CD8-positive, alpha-beta T cell (primary cell): ENCODE measurements at regions of chr18 and their contacts with region 1.

Region 1: GRCh38 chr18:62186774-62187542 is at the starts of genes PIGN and RELCH:
- DNase-seq: peak; percentile 89 to 99 (median 93)
- ATAC-seq: peak; percentile 91
- H3K4me3 ChIP-seq: peak within 1 kb of the TSS; percentile 92 to 99
- H3K4me3 Mint-ChIP-seq: peak within 1 kb of the TSS; percentile 100
- H3K27ac ChIP-seq: peak within 1 kb of the TSS; percentile 63 to 79
- H3K27ac Mint-ChIP-seq: peak within 1 kb of the TSS; percentile 97
- H3K4me1 ChIP-seq: peaks cover 43% of the 10 kb centered on the region
- H3K4me1 Mint-ChIP-seq: peaks cover 63% of the 10 kb centered on the region
- H3K27me3 ChIP-seq: no peaks in the 10 kb centered on the region
- H3K27me3 Mint-ChIP-seq: no peaks in the 10 kb centered on the region
- CTCF ChIP-seq: no peak
- total RNA-seq, gene PIGN: 8.1 to 9.9 TPM
- total RNA-seq, gene RELCH: 39.2 to 40.5 TPM

Region 2: GRCh38 chr18:61865466-61866175 is 321.3 kb before region 1 on chr18:
- CTCF ChIA-PET with region 1: no interaction called
- POLR2A ChIA-PET with region 1: no interaction called
- intact Hi-C with region 1: no loop called
- DNase-seq: no peak
- ATAC-seq: no peak
- H3K4me3 ChIP-seq: no peak overlapping the region
- H3K4me3 Mint-ChIP-seq: no peak overlapping the region
- H3K27ac ChIP-seq: no peak overlapping the region
- H3K27ac Mint-ChIP-seq: no peak overlapping the region
- H3K4me1 ChIP-seq: no peaks in the 10 kb centered on the region
- H3K4me1 Mint-ChIP-seq: no peaks in the 10 kb centered on the region
- H3K27me3 ChIP-seq: no peaks in the 10 kb centered on the region
- H3K27me3 Mint-ChIP-seq: no peaks in the 10 kb centered on the region
- CTCF ChIP-seq: no peak

Region 3: GRCh38 chr18:62249478-62250097 is 62.6 kb after region 1 on chr18:
- CTCF ChIA-PET with region 1: interaction called, 84 read pairs
- POLR2A ChIA-PET with region 1: interaction called, 11 read pairs
- intact Hi-C with region 1: loop called (anchors 1 kb)
- DNase-seq: peak; percentile 44 to 83 (median 74)
- ATAC-seq: peak; percentile 56
- H3K4me3 ChIP-seq: no peak overlapping the region
- H3K4me3 Mint-ChIP-seq: no peak overlapping the region
- H3K27ac ChIP-seq: no peak overlapping the region
- H3K27ac Mint-ChIP-seq: no peak overlapping the region
- H3K4me1 ChIP-seq: no peaks in the 10 kb centered on the region
- H3K4me1 Mint-ChIP-seq: no peaks in the 10 kb centered on the region
- H3K27me3 ChIP-seq: no peaks in the 10 kb centered on the region
- H3K27me3 Mint-ChIP-seq: no peaks in the 10 kb centered on the region
- CTCF ChIP-seq: peak; percentile 90

Region 4: GRCh38 chr18:62425465-62426195 is 238.7 kb after region 1 on chr18:
- CTCF ChIA-PET with region 1: no interaction called
- POLR2A ChIA-PET with region 1: no interaction called
- intact Hi-C with region 1: loop called (anchors 2 kb)
- DNase-seq: peak; percentile 3 to 82 (median 46)
- ATAC-seq: peak; percentile 45
- H3K4me3 ChIP-seq: no peak overlapping the region
- H3K4me3 Mint-ChIP-seq: no peak overlapping the region
- H3K27ac ChIP-seq: no peak overlapping the region
- H3K27ac Mint-ChIP-seq: no peak overlapping the region
- H3K4me1 ChIP-seq: peaks cover 5% of the 10 kb centered on the region
- H3K4me1 Mint-ChIP-seq: peaks cover 17% of the 10 kb centered on the region
- H3K27me3 ChIP-seq: no peaks in the 10 kb centered on the region
- H3K27me3 Mint-ChIP-seq: no peaks in the 10 kb centered on the region
- CTCF ChIP-seq: peak; percentile 87

Region 5: DNA sequence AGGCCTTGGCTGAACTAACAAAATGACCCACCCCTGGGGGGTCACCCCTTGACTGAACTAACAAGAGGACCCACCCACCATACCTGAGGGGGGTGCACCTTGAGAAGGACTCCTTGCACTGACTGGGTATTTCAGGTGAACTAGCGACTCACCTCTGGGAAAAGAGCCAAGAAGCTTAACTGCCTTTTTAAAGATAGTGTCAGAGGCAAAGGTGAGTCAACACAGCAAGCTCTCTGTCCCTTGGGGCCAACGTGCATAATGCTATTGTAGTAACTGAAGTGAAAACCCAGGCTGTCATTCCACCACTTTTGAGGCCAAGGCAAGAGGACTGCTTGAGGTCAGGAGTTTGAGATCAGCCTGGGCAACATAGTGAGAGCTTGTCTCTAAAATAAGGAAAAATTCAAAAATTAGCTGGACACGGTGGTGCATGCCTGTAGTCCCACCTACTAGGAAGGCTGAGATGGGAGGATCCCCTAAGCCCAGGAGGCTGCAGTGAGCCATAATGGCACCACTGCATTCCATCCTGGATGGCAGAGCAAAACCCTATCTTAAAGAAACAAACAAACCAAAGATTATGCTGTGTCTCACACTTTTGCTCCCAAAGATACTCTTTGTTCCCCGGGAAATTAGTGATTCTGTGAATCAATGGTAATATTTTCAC is 299.5 kb after region 1 on chr18:
- CTCF ChIA-PET with region 1: no interaction called
- POLR2A ChIA-PET with region 1: no interaction called
- intact Hi-C with region 1: no loop called
- DNase-seq: no peak
- ATAC-seq: no peak
- H3K4me3 ChIP-seq: no peak overlapping the region
- H3K4me3 Mint-ChIP-seq: no peak overlapping the region
- H3K27ac ChIP-seq: no peak overlapping the region
- H3K27ac Mint-ChIP-seq: no peak overlapping the region
- H3K4me1 ChIP-seq: no peaks in the 10 kb centered on the region
- H3K4me1 Mint-ChIP-seq: no peaks in the 10 kb centered on the region
- H3K27me3 ChIP-seq: peaks cover 0 to 3% of the 10 kb centered on the region in 2 experiments
- H3K27me3 Mint-ChIP-seq: peaks cover 33% of the 10 kb centered on the region
- CTCF ChIP-seq: no peak

Region 6: GRCh38 chr18:62982600-62983251 is 795.8 kb after region 1 on chr18:
- CTCF ChIA-PET with region 1: interaction called, 4 read pairs
- POLR2A ChIA-PET with region 1: no interaction called
- intact Hi-C with region 1: loop called (anchors 2 to 5 kb)
- DNase-seq: peak; percentile 25 to 77 (median 57)
- ATAC-seq: peak; percentile 65
- H3K4me3 ChIP-seq: no peak overlapping the region
- H3K4me3 Mint-ChIP-seq: peak overlapping the region; percentile 62
- H3K27ac ChIP-seq: no peak overlapping the region
- H3K27ac Mint-ChIP-seq: no peak overlapping the region
- H3K4me1 ChIP-seq: no peaks in the 10 kb centered on the region
- H3K4me1 Mint-ChIP-seq: peaks cover 6% of the 10 kb centered on the region
- H3K27me3 ChIP-seq: no peaks in the 10 kb centered on the region
- H3K27me3 Mint-ChIP-seq: no peaks in the 10 kb centered on the region
- CTCF ChIP-seq: peak; percentile 70

Region 7: DNA sequence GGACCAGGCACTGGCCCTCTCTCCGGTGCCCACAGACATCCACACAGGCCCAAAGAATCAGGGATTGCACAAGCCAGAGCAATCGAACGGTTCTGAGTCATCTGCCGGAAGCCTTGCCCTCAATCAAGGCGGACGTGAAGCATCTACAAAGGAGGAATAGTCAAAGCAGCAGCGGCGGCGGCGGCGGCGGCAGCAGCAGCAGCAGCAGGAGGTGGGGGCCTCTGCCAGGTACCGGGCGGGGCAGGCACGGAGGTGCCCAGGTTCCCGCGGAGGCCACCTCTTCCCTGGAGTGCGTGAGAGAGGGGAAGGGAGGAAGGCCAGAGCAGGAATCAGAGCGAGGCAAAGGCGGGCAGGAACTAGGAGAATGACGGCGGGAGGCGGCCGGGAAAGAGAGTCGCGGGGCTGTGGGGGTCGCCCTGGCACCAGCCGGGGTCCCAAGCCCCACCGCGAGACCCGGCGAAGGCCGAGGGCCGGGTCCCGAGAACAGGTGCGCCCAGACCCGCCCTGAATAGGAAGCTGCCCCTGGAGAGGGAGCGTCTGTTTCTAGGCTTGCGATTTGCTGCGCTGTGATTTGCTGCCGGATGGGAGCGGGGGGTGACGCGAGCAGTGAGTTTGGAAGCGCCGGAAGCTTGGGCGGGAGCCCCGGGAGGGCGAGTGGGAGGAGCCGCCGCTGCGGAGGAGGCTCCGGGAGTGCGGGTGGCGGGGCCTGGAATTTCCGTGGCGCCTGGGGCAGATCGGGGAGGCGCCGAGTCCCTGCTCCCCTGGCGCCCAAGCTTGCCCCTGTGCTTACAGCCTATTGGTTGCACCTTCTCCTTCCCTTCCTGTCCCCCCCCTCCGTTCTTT is 1783.2 kb after region 1 on chr18 and contains the start of gene SERPINB8:
- CTCF ChIA-PET with region 1: no interaction called
- POLR2A ChIA-PET with region 1: no interaction called
- intact Hi-C with region 1: loop called (anchors 1 to 10 kb)
- DNase-seq: peak; percentile 48 to 88 (median 79)
- ATAC-seq: peak; percentile 87
- H3K4me3 ChIP-seq: peak within 1 kb of the TSS; percentile 68 to 97
- H3K4me3 Mint-ChIP-seq: peak within 1 kb of the TSS; percentile 98
- H3K27ac ChIP-seq: peak within 1 kb of the TSS; percentile 78 to 92
- H3K27ac Mint-ChIP-seq: peak within 1 kb of the TSS; percentile 96
- H3K4me1 ChIP-seq: peaks cover 16% of the 10 kb centered on the region
- H3K4me1 Mint-ChIP-seq: peaks cover 41% of the 10 kb centered on the region
- H3K27me3 ChIP-seq: no peaks in the 10 kb centered on the region
- H3K27me3 Mint-ChIP-seq: no peaks in the 10 kb centered on the region
- CTCF ChIP-seq: no peak
- total RNA-seq, gene SERPINB8: 14.8 to 15.7 TPM